ENCODE measurements at regions of chr19 and their contacts with region 1.

Region 1: GRCh38 chr19:46016426-46017094 is 6.3 kb downstream of the PGLYRP1 start:
- DNase-seq: peak; percentile 89
- ATAC-seq: peak; percentile 66
- H3K4me3 Mint-ChIP-seq: peak overlapping the region; percentile 87
- H3K27ac Mint-ChIP-seq: peak overlapping the region; percentile 45; the same call in 1 of the 2 replicates
- H3K4me1 Mint-ChIP-seq: peaks cover 21% of the 10 kb centered on the region
- H3K27me3 Mint-ChIP-seq: peaks cover 31% of the 10 kb centered on the region
- CTCF ChIP-seq: peak; percentile 81

Region 2: GRCh38 chr19:45902651-45903625 is 113.6 kb before region 1 on chr19:
- CTCF ChIA-PET with region 1: interaction called, 23 read pairs
- POLR2A ChIA-PET with region 1: interaction called, 6 read pairs
- DNase-seq: peak; percentile 99
- ATAC-seq: peak; percentile 84
- H3K4me3 Mint-ChIP-seq: peak overlapping the region; percentile 91
- H3K27ac Mint-ChIP-seq: peak overlapping the region; percentile 57; the same call in 1 of the 2 replicates
- H3K4me1 Mint-ChIP-seq: peaks cover 12% of the 10 kb centered on the region
- H3K27me3 Mint-ChIP-seq: peaks cover 25% of the 10 kb centered on the region
- CTCF ChIP-seq: no peak

Region 3: DNA sequence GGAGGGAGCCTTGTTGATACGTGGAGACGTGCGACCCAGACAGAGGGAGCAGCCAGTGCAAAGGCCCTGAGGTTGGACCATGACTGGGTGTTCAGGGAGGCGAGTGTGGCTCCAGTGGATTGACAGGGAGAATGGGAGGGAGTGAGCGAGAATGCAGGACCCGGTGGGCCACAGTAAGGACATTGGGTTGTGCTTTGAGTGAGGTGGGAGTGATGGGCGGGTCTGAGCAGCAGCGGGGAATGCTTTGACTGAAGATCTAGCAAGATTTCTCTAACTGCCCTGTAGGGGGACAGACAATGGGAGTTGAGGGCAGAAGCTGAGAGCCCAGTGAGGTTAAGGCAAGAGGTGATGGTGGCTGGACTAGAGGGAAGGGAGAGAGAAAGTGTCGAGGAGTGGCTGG is 94.3 kb before region 1 on chr19:
- CTCF ChIA-PET with region 1: interaction called, 19 read pairs
- POLR2A ChIA-PET with region 1: interaction called, 3 read pairs
- DNase-seq: peak; percentile 61
- ATAC-seq: peak; percentile 97
- H3K4me3 Mint-ChIP-seq: no peak overlapping the region
- H3K27ac Mint-ChIP-seq: no peak overlapping the region
- H3K4me1 Mint-ChIP-seq: peaks cover 2% of the 10 kb centered on the region; the same call in 1 of the 2 replicates
- H3K27me3 Mint-ChIP-seq: peaks cover 16% of the 10 kb centered on the region
- CTCF ChIP-seq: peak; percentile 38; the same call in 1 of the 2 replicates

Region 4: GRCh38 chr19:45952686-45953505 is 63.7 kb before region 1 on chr19:
- CTCF ChIA-PET with region 1: interaction called, 12 read pairs
- POLR2A ChIA-PET with region 1: no interaction called
- DNase-seq: peak; percentile 95
- ATAC-seq: peak; percentile 92
- H3K4me3 Mint-ChIP-seq: peak overlapping the region; percentile 78
- H3K27ac Mint-ChIP-seq: peak overlapping the region; percentile 85
- H3K4me1 Mint-ChIP-seq: peaks cover 6% of the 10 kb centered on the region; the same call in 1 of the 2 replicates
- H3K27me3 Mint-ChIP-seq: peaks cover 72% of the 10 kb centered on the region
- CTCF ChIP-seq: no peak

Region 5: GRCh38 chr19:45994989-45995714 is 21.4 kb before region 1 on chr19 and contains the start of gene CCDC61:
- CTCF ChIA-PET with region 1: interaction called, 14 read pairs
- POLR2A ChIA-PET with region 1: no interaction called
- DNase-seq: peak; percentile 97
- ATAC-seq: peak; percentile 96
- H3K4me3 Mint-ChIP-seq: no peak within 1 kb of the TSS
- H3K27ac Mint-ChIP-seq: peak within 1 kb of the TSS; percentile 34
- H3K4me1 Mint-ChIP-seq: peaks cover 16% of the 10 kb centered on the region
- H3K27me3 Mint-ChIP-seq: peaks cover 12% of the 10 kb centered on the region; the same call in 1 of the 2 replicates
- CTCF ChIP-seq: no peak
- total RNA-seq, gene CCDC61: 25.2 to 33.7 TPM (median 26.6 TPM) in 3 replicates

Region 6: GRCh38 chr19:46049597-46049996 is 33.0 kb after region 1 on chr19:
- CTCF ChIA-PET with region 1: interaction called, 13 read pairs
- POLR2A ChIA-PET with region 1: no interaction called
- DNase-seq: peak; percentile 79
- ATAC-seq: peak; percentile 99
- H3K4me3 Mint-ChIP-seq: no peak overlapping the region
- H3K27ac Mint-ChIP-seq: no peak overlapping the region; the same call in 1 of the 2 replicates
- H3K4me1 Mint-ChIP-seq: no peaks in the 10 kb centered on the region
- H3K27me3 Mint-ChIP-seq: peaks cover 74% of the 10 kb centered on the region
- CTCF ChIP-seq: peak; percentile 37; the same call in 1 of the 2 replicates

Region 7: GRCh38 chr19:46513461-46514236 is 497.1 kb after region 1 on chr19:
- CTCF ChIA-PET with region 1: no interaction called
- POLR2A ChIA-PET with region 1: no interaction called
- DNase-seq: peak; percentile 90
- ATAC-seq: peak; percentile 84
- H3K4me3 Mint-ChIP-seq: no peak overlapping the region
- H3K27ac Mint-ChIP-seq: no peak overlapping the region
- H3K4me1 Mint-ChIP-seq: 0 out of 2 replicates have a peak, but pooled peaks cover 2% of the 10 kb centered on the region
- H3K27me3 Mint-ChIP-seq: no peaks in the 10 kb centered on the region
- CTCF ChIP-seq: peak; percentile 93

Measured in WTC11 (cell line).